MCF 10A (cell line): ENCODE measurements at regions of chrX and their contacts with region 1.

Region 1: DNA sequence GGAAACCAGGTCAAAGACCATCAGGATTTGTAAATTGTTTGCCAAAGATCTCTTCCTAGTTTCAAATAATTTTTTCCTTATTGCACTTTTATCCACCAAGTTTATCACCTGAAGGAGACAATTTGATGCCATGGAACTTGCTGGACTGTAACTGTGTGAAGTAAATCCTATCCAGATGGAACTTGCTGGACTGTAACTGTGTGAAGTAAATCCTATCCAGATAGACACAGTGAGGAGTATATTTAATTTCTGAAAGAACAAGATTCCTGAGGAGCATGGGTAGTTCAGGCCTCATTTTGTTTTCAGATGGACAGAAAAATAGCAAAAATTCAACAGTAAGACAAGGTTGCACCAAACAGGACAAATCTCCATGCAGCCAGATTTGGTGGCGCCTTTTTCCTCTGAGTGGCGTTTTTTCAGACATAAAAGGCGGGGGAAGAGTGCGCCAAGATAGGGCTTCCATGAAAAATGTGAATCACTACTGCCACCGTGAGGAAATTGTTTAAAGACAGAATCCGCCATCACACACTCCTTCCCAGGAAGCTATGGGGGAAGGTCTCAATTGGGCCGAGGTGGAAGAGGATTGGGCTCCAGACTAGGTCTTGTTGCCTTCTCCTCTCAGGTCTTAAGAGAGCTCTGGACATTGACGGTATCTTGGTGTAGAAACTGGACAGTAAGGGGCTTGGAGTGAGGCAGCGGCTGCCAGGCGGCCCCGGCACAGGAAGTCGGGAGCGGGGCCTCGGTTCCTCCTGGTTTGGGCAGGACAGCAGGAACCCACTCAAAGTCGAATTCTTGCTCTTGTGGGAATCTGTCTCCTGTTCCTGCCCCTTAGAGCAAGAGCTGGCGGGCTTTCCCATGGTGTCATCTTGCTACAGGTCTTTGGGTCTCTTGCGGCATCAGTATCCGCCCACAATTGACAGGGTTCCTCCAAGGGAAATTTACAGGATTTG is 234.7 kb downstream of the OR13H1 start:
- DNase-seq: peak; percentile 88
- H3K4me3 Mint-ChIP-seq: peak overlapping the region; percentile 72
- H3K27ac Mint-ChIP-seq: peak overlapping the region; percentile 97
- H3K4me1 Mint-ChIP-seq: peaks cover 9% of the 10 kb centered on the region
- H3K27me3 Mint-ChIP-seq: peaks cover 9% of the 10 kb centered on the region
- CTCF ChIP-seq: peak; percentile 39

Region 2: DNA sequence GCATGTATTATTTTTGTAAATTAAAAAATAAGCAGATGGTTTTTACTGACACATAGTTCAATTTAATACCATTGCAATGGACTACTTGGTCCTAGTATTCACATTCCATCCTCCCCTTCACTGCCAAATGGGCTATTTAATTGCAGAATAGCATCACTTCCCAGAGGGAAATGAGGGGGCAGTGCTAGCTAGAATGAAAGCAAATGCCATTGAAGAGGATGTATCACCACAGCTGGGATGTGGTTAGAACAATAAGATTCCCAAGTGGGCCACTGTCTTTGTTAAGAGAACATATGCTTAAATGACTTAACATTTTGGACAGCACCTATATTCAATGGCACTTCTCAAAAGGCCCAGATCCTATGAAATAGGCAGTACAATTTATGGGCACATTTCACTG is 1152.0 kb before region 1 on chrX:
- CTCF ChIA-PET with region 1: no interaction called
- POLR2A ChIA-PET with region 1: no interaction called
- intact Hi-C with region 1: no loop called
- DNase-seq: no peak
- H3K4me3 Mint-ChIP-seq: no peak overlapping the region
- H3K27ac Mint-ChIP-seq: no peak overlapping the region
- H3K4me1 Mint-ChIP-seq: no peaks in the 10 kb centered on the region
- H3K27me3 Mint-ChIP-seq: peaks cover 30% of the 10 kb centered on the region
- CTCF ChIP-seq: no peak

Region 3: GRCh38 chrX:131728295-131729145 is 50.0 kb before region 1 on chrX:
- CTCF ChIA-PET with region 1: interaction called, 3 read pairs
- POLR2A ChIA-PET with region 1: no interaction called
- intact Hi-C with region 1: loop called (anchors 1 kb)
- DNase-seq: peak; percentile 93
- H3K4me3 Mint-ChIP-seq: peak overlapping the region; percentile 85
- H3K27ac Mint-ChIP-seq: peak overlapping the region; percentile 98
- H3K4me1 Mint-ChIP-seq: no peaks in the 10 kb centered on the region
- H3K27me3 Mint-ChIP-seq: no peaks in the 10 kb centered on the region
- CTCF ChIP-seq: peak; percentile 52

Region 4: DNA sequence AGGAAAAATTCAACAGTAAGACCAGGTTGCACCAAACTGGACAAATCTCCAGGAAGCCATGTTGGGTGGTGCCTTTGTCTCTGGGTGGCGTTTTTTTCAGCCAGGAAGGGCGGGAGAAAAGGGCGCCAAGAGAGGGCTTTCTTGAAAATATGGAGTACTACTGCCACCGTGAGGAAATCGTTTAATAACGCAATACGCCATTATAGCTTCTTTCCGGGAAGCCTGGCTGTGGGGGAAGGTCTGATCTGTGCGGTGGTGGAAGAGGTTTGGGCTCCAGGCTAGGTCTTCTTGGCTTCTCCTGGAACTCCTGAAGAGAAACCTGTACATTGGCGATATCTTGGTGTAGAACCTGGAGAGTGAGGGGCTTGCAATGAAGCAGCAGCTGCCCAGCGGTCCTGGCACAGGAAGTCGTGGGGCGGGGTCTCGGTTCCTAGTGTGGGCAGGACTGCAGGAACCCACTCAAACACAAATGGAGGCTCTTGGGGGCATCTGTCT is 32.0 kb before region 1 on chrX:
- CTCF ChIA-PET with region 1: interaction called, 6 read pairs
- POLR2A ChIA-PET with region 1: interaction called, 6 read pairs
- intact Hi-C with region 1: loop called (anchors 1 kb)
- DNase-seq: peak; percentile 95
- H3K4me3 Mint-ChIP-seq: peak overlapping the region; percentile 93
- H3K27ac Mint-ChIP-seq: peak overlapping the region; percentile 94
- H3K4me1 Mint-ChIP-seq: peaks cover 13% of the 10 kb centered on the region
- H3K27me3 Mint-ChIP-seq: no peaks in the 10 kb centered on the region
- CTCF ChIP-seq: peak; percentile 62